PC-9 (cell line): ENCODE measurements at regions of chr14 and their contacts with region 1.

Region 1: DNA sequence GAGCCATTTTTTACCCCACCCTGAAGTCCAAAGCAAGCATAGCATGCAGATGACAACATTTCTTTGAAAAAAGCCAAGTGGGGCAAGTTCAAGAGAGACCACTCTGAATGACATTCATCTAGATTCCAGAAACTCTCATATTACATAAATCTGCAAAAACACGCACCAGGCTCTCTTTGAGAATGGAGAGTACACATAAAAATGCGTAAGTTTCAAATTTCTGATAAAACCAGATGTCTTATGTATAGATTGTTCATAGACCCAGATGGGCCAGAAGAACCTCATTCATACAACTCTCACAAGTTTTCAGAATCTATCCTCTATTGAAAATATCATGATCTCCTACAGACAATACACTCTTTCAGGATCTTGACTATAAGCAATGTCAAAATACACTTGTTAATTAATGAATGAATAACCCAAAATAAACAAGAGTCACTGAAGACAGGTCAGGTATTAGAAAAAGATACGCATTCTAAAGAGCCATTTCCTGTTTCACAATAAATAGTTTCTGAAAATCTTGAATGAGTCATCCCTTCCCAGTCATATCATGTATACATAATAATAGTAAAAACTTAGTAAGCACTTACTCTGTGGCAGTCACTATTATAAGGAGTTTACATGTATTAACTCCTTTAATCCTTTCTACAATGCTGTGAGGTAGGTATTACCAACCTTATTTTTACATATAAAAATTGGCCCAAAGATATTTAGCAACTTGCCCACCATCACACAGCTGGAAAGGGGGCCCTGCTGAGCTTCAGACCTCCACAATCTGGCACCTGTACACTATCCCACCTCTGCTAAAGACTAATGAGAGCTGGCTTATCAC is 72.0 kb downstream of the PPP2R5E start:
- DNase-seq: peak in 1 of 2 experiments; percentile 95
- H3K4me3 ChIP-seq: no peak overlapping the region
- H3K27ac ChIP-seq: peak overlapping the region; percentile 71
- H3K4me1 ChIP-seq: peaks cover 64% of the 10 kb centered on the region
- H3K27me3 ChIP-seq: no peaks in the 10 kb centered on the region
- CTCF ChIP-seq: no peak

Region 2: GRCh38 chr14:63437953-63438757 is 33.0 kb before region 1 on chr14:
- CTCF ChIA-PET with region 1: no interaction called
- POLR2A ChIA-PET with region 1: no interaction called
- intact Hi-C with region 1: loop called (anchors 1 kb)
- DNase-seq: peak; percentile 91 to 96
- H3K4me3 ChIP-seq: peak overlapping the region; percentile 53; the same call in 1 of the 2 replicates
- H3K27ac ChIP-seq: peak overlapping the region; percentile 79
- H3K4me1 ChIP-seq: peaks cover 37% of the 10 kb centered on the region
- H3K27me3 ChIP-seq: no peaks in the 10 kb centered on the region
- CTCF ChIP-seq: peak; percentile 39; the same call in 1 of the 2 replicates

Region 3: DNA sequence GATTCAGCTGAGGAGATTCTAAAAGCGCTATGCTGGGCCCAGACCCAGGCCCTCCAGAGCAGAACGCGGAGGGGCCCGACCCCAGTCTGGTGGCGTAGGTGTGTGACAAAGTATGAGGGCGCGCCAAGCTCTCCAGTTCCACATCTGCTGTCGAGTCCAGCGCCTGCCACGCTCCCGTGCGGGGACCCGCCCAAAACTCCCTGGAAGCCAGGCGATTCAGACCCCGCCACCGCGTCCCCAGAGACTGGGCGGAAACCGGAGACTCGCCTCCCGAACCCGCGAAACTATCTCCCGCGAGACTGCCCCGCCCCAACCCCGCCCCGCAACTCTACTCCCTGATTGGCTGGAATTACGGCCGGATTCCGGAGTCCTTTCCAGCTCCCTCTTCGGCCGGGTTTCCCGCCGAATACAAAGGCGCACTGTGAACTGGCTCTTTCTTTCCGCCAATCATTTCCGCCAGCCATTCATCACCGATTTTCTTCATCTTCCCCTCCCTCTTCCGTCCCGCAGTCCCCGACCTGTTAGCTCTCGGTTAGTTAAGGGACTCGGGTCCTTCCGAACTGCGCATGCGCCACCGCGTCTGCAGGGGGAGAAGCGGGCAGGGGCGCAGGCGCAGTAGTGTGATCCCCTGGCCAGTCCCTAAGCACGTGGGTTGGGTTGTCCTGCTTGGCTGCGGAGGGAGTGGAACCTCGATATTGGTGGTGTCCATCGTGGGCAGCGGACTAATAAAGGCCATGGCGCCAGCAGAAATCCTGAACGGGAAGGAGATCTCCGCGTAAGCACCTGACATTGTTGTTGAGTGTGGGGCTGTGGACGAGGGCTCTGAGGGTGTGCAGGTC is 916.7 kb after region 1 on chr14 and contains the start of gene MTHFD1:
- CTCF ChIA-PET with region 1: no interaction called
- POLR2A ChIA-PET with region 1: no interaction called
- intact Hi-C with region 1: no loop called
- DNase-seq: peak; percentile 98 to 99
- H3K4me3 ChIP-seq: peak within 1 kb of the TSS; percentile 73
- H3K27ac ChIP-seq: peak within 1 kb of the TSS; percentile 72
- H3K4me1 ChIP-seq: peaks cover 23% of the 10 kb centered on the region
- H3K27me3 ChIP-seq: no peaks in the 10 kb centered on the region
- CTCF ChIP-seq: no peak
- total RNA-seq, gene MTHFD1: 130 and 161 TPM in 2 replicates

Region 4: GRCh38 chr14:64400829-64401459 is 929.8 kb after region 1 on chr14:
- CTCF ChIA-PET with region 1: no interaction called
- POLR2A ChIA-PET with region 1: no interaction called
- intact Hi-C with region 1: no loop called
- DNase-seq: no peak
- H3K4me3 ChIP-seq: no peak overlapping the region
- H3K27ac ChIP-seq: no peak overlapping the region
- H3K4me1 ChIP-seq: no peaks in the 10 kb centered on the region
- H3K27me3 ChIP-seq: no peaks in the 10 kb centered on the region
- CTCF ChIP-seq: no peak